ENCODE measurements at regions of chr5 and their contacts with region 1.

Region 1: DNA sequence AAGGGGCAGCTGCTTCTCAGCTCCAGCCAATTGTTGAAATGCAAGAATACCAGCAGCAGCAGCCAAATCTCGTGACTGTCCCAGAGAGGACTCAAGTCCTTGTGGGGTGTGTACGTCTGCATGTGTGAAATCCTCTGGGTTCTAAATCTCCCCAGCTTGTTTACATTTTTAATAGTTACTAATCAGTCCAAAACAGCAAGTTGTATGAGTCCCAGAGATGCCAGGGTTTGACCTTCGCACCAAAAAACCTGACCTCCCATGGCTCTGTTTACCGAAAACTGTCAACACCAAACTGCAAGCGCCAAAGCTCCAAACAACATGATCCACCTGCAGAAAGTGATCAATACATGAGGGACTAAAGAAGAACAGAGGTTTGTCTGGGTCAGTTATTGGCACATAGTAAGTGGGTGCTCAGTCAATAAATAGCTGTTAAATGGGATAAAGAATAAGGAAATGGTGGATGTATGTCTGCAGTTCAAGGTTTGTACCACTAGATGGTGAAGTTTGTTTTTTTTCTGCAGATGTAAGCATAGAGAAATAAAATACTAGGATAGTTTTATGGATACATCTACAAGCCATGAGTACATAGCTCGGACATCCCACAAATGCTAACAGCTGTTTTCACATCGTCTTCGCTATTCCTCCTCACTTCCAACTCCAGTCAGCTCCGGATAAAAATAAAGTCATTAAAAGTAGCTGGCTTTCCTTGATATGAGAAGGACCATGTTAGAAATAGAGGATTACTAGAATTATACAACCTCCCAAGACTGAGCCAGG is 85.3 kb upstream of the ADRB2 start:
- DNase-seq: no peak
- ATAC-seq: peak; percentile 51 to 80

Region 2: DNA sequence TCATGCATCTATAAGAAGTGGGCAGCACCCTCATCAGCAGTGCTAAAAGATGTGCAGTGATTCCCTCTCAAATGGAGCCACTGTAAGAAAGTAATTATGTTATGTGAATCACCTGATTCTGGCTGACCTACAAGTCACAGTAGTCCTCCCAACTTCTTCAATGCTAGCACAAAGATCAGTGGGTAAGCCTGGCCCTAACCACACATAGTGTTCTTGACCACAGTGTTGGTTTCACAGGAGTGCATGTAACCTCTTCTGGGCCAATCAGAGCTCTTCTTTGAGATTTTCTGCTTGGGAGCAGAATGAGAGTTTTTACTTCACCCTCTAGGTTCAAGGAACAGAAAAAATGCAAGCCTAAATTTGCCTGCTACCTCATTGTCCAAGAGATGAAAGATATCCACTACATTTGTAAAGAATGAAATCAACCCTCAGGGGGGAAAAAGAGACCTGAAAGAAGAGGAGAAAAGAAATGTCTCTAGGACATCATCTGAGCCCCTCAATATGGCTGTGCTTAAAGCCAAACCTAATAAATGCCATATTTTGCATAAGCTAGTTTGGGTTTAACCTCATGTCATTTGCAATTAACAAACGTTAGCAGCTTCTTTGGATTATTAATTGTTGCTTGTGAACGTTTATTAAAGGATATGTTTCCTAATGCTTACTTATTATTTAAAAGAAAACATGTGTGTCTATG is 19.9 kb after region 1 on chr5:
- intact Hi-C with region 1: no loop called
- DNase-seq: no peak
- ATAC-seq: no peak

Region 3: GRCh38 chr5:148805326-148806290 is 64.5 kb after region 1 on chr5:
- intact Hi-C with region 1: loop called in 1 of 2 experiments (anchors 10 kb)
- DNase-seq: peak; percentile 35
- ATAC-seq: peak; percentile 88 to 89

Region 4: DNA sequence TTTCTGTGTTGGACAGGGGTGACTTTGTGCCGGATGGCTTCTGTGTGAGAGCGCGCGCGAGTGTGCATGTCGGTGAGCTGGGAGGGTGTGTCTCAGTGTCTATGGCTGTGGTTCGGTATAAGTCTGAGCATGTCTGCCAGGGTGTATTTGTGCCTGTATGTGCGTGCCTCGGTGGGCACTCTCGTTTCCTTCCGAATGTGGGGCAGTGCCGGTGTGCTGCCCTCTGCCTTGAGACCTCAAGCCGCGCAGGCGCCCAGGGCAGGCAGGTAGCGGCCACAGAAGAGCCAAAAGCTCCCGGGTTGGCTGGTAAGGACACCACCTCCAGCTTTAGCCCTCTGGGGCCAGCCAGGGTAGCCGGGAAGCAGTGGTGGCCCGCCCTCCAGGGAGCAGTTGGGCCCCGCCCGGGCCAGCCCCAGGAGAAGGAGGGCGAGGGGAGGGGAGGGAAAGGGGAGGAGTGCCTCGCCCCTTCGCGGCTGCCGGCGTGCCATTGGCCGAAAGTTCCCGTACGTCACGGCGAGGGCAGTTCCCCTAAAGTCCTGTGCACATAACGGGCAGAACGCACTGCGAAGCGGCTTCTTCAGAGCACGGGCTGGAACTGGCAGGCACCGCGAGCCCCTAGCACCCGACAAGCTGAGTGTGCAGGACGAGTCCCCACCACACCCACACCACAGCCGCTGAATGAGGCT is 85.0 kb after region 1 on chr5 and contains the start of gene ADRB2:
- intact Hi-C with region 1: loop called in 1 of 2 experiments (anchors 10 kb)
- DNase-seq: peak; percentile 96
- ATAC-seq: peak; percentile 96 to 99
- total RNA-seq, gene ADRB2: 3.3 to 5.8 TPM

Region 5: DNA sequence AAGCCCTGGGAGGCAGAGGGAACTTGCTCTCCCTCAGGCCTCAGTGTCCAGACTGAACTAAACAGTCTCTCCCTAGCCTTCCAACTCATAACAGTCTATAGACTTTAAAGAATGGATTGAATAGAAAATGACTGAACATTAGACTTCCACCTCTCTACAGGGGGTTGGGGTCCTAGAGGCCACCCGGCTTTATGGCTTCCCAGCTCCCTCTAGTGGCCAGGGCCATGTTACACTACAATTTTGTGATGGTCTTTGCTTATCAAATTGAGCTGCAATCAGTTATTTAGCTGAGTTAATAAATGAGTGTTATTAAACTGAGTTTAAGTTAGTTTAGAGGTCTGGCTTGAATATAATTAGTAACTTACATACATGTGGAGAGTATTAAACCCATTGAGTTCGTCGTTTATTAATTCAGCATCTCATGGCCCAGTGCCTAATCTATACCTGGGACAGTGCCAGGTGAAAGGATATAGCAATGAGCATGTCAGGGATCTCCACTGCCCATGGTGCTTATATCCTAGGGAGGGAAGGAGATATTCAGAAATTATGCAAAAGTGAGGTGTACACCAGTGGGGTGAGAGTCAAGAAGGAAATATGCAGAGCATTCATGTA is 216.5 kb after region 1 on chr5:
- intact Hi-C with region 1: loop called in 1 of 2 experiments (anchors 2 kb)
- DNase-seq: no peak
- ATAC-seq: peak; percentile 28 to 61

Region 6: GRCh38 chr5:149035372-149035790 is 294.2 kb after region 1 on chr5:
- intact Hi-C with region 1: loop called in 1 of 2 experiments (anchors 5 kb)
- DNase-seq: peak; percentile 79
- ATAC-seq: peak; percentile 93 to 94

Region 7: GRCh38 chr5:149114403-149115312 is 373.5 kb after region 1 on chr5:
- intact Hi-C with region 1: loop called in 1 of 2 experiments (anchors 5 kb)
- DNase-seq: peak; percentile 69
- ATAC-seq: peak; percentile 96 to 98